CD4-positive, alpha-beta T cell (primary cell): ENCODE measurements at regions of chr3 and their contacts with region 1.

Region 1: GRCh38 chr3:16482770-16483531 is 30.5 kb downstream of the RFTN1 start:
- DNase-seq: peak in 12 of 14 experiments; percentile 10 to 71 (median 40)
- ATAC-seq: peak; percentile 72
- H3K4me3 ChIP-seq: no peak overlapping the region
- H3K4me3 Mint-ChIP-seq: peak overlapping the region; percentile 81
- H3K27ac ChIP-seq: peak overlapping the region; percentile 56 to 71
- H3K27ac Mint-ChIP-seq: peak overlapping the region; percentile 91
- H3K4me1 ChIP-seq: peaks cover 44% of the 10 kb centered on the region
- H3K4me1 Mint-ChIP-seq: peaks cover 83% of the 10 kb centered on the region
- H3K27me3 ChIP-seq: no peaks in the 10 kb centered on the region
- H3K27me3 Mint-ChIP-seq: no peaks in the 10 kb centered on the region
- CTCF ChIP-seq: no peak

Region 2: GRCh38 chr3:16378920-16379319 is 104.0 kb before region 1 on chr3:
- CTCF ChIA-PET with region 1: no interaction called
- POLR2A ChIA-PET with region 1: interaction called, 6 read pairs
- intact Hi-C with region 1: loop called in 1 of 2 experiments (anchors 5 kb)
- DNase-seq: peak in 2 of 14 experiments; percentile 25 to 49
- ATAC-seq: peak; percentile 13
- H3K4me3 ChIP-seq: no peak overlapping the region
- H3K4me3 Mint-ChIP-seq: no peak overlapping the region
- H3K27ac ChIP-seq: peak overlapping the region in 1 of 2 donors; percentile 44
- H3K27ac Mint-ChIP-seq: peak overlapping the region; percentile 90
- H3K4me1 ChIP-seq: peaks cover 59% of the 10 kb centered on the region
- H3K4me1 Mint-ChIP-seq: peaks cover 97% of the 10 kb centered on the region
- H3K27me3 ChIP-seq: no peaks in the 10 kb centered on the region
- H3K27me3 Mint-ChIP-seq: no peaks in the 10 kb centered on the region
- CTCF ChIP-seq: no peak

Region 3: DNA sequence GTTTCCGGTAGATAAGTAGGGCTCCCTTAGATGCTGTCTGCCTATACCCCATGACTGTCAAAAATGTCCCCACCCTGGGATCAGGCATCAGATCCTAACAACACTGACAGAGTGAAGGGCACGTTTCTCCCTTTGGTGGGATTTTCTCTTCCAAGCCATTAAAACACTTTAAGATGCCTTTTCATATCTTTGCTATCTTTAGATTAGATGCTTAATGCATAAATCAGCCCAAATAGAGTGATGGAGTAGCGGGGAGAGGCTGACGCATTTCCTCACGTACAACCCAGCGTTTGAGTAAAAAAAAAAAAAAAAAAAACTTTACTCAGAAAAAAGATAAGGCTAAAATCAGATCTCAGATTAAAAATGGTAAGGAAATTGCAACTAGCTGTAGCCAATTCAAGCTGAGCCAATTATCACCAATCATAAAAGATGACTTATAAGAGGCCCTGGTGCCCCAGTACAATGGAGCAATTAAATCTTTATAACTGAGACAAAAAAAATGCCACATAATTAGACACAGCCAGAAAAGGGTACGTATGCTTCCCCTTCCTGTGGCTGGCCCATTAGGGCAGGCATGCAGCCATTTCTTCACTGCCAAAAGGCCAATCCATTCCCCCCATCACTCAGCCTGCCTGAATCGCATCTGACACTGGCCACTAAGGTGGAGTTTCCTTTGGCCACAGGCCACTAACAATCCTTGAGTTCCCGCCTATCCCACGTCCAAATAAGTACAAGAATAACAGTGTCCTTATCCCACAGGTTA is 14.4 kb before region 1 on chr3:
- CTCF ChIA-PET with region 1: interaction called, 3 read pairs
- POLR2A ChIA-PET with region 1: interaction called, 5 read pairs
- intact Hi-C with region 1: loop called (anchors 1 to 2 kb)
- DNase-seq: peak in 5 of 14 experiments; percentile 24 to 65 (median 48)
- ATAC-seq: peak; percentile 81
- H3K4me3 ChIP-seq: no peak overlapping the region
- H3K4me3 Mint-ChIP-seq: peak overlapping the region; percentile 76
- H3K27ac ChIP-seq: peak overlapping the region; percentile 18 to 30
- H3K27ac Mint-ChIP-seq: peak overlapping the region; percentile 95
- H3K4me1 ChIP-seq: peaks cover 38% of the 10 kb centered on the region
- H3K4me1 Mint-ChIP-seq: peaks cover 58% of the 10 kb centered on the region
- H3K27me3 ChIP-seq: no peaks in the 10 kb centered on the region
- H3K27me3 Mint-ChIP-seq: no peaks in the 10 kb centered on the region
- CTCF ChIP-seq: no peak

Region 4: GRCh38 chr3:16496408-16497222 is 13.7 kb after region 1 on chr3:
- CTCF ChIA-PET with region 1: no interaction called
- POLR2A ChIA-PET with region 1: interaction called, 38 read pairs
- intact Hi-C with region 1: no loop called
- DNase-seq: peak in 1 of 14 experiments; percentile 17
- ATAC-seq: peak; percentile 57
- H3K4me3 ChIP-seq: no peak overlapping the region
- H3K4me3 Mint-ChIP-seq: peak overlapping the region; percentile 50
- H3K27ac ChIP-seq: peak overlapping the region in 1 of 2 donors; percentile 14
- H3K27ac Mint-ChIP-seq: peak overlapping the region; percentile 58
- H3K4me1 ChIP-seq: peaks cover 36% of the 10 kb centered on the region
- H3K4me1 Mint-ChIP-seq: peaks cover 63% of the 10 kb centered on the region
- H3K27me3 ChIP-seq: no peaks in the 10 kb centered on the region
- H3K27me3 Mint-ChIP-seq: no peaks in the 10 kb centered on the region
- CTCF ChIP-seq: no peak